AG04449 (cell line): ENCODE measurements at regions of chr2 and their contacts with region 1.

Region 1: DNA sequence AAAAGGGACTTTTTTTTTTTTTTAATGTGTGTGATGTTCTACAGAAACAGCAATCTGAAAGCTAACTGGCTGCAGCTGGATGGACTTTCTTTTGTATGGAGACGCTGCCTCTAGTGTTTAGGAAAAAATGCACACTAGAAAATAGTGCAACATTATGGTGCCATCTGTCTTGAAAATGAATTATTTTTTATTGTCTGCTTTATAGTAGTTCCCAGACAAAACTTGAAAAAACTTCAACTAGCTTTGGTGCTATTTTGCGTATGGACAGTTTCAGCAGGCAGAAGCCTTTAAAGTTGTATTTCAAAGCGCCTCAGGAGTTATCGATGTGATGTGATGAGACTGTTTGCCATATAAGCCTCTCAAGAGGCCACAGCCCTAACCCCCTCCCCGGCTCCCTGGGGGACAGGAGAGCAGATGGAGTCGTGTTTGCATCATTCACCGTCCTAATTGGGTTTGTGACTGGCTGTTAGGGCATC is 86.9 kb downstream of the LTBP1 start:
- DNase-seq: no peak
- H3K4me3 ChIP-seq: peak overlapping the region; percentile 52
- CTCF ChIP-seq: peak; percentile 46

Region 2: GRCh38 chr2:33011941-33012340 is 21.7 kb before region 1 on chr2:
- CTCF ChIA-PET with region 1: no interaction called
- POLR2A ChIA-PET with region 1: no interaction called
- DNase-seq: no peak
- H3K4me3 ChIP-seq: no peak overlapping the region
- CTCF ChIP-seq: no peak

Region 3: GRCh38 chr2:33022989-33023727 is 10.5 kb before region 1 on chr2:
- CTCF ChIA-PET with region 1: interaction called, 24 read pairs
- POLR2A ChIA-PET with region 1: no interaction called
- DNase-seq: peak; percentile 46
- H3K4me3 ChIP-seq: no peak overlapping the region
- CTCF ChIP-seq: no peak

Region 4: DNA sequence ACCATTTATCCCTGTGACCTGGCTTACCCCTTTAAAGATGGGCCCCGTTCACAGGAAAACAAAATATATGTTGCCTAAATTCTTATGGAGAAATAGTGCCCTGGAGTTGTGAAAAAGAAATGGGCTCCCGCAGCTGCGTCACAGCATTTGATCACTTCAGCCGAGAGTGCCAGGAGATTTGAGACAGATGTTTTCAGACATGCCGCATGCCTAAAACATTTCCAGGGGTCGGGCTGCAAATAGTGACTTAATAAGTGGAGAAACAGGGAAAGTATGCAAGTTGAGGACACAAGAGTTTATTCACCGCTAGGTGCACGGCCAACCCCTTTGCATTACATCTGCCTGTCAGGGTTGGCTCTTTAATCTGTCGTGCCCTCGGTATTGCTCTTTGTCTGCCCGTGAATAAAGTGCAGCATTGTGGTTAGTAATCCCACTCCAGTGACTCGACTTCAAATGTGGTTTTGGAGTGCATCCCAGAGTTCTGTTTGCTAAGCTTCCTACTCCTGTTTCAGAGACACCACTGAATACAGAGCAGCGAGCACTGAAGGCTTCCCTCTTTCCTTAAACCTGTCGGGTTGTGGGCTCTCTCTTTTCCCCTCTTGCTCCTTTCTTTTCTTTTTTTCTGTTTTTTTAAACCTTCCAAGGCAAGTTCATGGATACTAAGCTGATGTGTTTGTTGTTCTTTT is 100.6 kb after region 1 on chr2:
- CTCF ChIA-PET with region 1: interaction called, 14 read pairs
- POLR2A ChIA-PET with region 1: no interaction called
- DNase-seq: peak; percentile 92
- H3K4me3 ChIP-seq: peak overlapping the region; percentile 83
- CTCF ChIP-seq: peak; percentile 43

Region 5: DNA sequence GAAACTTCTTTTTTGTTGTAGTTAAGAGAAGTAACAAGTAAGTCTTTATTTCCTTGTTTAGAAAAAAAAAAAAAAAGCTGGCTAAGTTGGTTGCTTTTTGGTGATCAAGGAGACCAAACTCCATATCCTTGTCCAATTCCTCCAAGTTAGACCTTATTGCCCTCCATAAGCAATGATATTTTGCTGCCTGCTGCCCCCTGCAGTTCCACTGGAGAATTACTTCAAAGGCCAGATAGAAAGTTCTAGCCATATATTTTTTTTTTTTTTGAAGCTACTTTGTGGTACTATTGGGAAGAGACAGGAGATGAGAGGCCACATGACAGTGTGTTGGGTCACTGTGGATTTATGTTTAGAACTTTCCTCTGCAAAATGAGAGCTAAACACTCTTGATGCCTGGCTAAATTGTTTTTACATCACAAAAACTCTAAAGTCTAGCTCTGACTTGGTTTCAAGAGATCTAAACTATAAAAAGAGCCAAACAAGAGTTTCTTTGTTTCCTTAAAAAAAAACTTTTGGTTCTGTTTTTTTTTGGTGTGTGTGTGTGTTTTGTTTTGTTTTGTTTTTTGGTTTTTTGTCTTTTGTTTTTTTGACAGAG is 362.1 kb after region 1 on chr2:
- CTCF ChIA-PET with region 1: interaction called, 15 read pairs
- POLR2A ChIA-PET with region 1: no interaction called
- DNase-seq: no peak
- H3K4me3 ChIP-seq: no peak overlapping the region
- CTCF ChIP-seq: peak; percentile 52